Dendritic cell treated with granulocyte-macrophage colony-stimulating factor and Interleukin-4, amounts not matched to agents 40 ng/mL and 50 ng/mL, for 4 days (primary cell): ENCODE measurements at regions of chr7 and their contacts with region 1.

Region 1: DNA sequence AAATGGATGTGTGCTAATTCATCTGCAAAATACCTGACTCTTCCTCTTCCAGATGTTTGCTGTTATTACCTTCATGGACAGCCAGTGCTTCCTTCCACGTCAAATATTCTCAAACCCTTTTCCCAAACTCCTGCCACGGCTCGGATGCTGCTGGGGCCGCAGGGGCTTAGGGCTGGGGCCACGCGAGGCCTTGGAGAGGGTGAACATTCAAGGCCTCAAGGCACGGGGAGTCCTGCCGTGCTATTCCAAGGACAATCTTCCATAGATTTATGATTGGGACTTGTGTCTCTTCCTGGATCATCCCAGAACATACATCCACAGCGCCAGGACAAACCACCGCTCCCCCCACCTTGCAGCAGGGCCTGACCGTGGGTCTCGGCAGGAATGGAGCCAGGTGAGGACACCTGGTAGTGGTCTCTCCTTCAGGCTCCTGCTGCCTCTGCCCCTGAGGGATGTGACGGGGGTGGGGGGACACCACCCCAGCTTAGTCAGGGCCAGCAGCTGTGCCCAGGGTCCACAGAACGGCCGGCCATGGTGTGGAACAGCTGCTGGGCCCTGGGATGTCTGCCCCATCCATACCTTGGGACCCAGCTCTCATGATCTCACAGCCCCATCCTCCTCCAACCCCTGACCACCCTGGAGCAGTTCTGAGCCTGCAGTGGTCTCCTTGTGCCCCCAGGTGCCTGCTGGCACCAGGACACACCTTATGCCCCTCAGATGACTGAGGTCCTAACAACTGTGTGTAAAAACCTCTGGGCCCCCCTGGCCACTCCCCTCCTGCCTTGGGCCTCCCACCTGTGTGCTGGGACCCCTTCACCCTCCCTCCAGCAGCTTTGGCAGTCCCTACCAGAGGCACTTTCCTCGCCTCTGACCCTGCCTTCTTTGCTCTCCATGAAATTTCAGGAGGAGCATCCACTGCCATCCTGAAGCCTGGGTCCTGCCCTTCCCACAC is 16.7 kb downstream of the VIPR2 start:
- H3K4me3 Mint-ChIP-seq: no peak overlapping the region
- H3K27ac Mint-ChIP-seq: no peak overlapping the region
- H3K4me1 Mint-ChIP-seq: no peaks in the 10 kb centered on the region
- H3K27me3 Mint-ChIP-seq: peaks cover 2% of the 10 kb centered on the region

Region 2: GRCh38 chr7:158760936-158761335 is 367.0 kb before region 1 on chr7:
- intact Hi-C with region 1: no loop called
- H3K4me3 Mint-ChIP-seq: no peak overlapping the region
- H3K27ac Mint-ChIP-seq: no peak overlapping the region
- H3K4me1 Mint-ChIP-seq: no peaks in the 10 kb centered on the region
- H3K27me3 Mint-ChIP-seq: no peaks in the 10 kb centered on the region

Region 3: DNA sequence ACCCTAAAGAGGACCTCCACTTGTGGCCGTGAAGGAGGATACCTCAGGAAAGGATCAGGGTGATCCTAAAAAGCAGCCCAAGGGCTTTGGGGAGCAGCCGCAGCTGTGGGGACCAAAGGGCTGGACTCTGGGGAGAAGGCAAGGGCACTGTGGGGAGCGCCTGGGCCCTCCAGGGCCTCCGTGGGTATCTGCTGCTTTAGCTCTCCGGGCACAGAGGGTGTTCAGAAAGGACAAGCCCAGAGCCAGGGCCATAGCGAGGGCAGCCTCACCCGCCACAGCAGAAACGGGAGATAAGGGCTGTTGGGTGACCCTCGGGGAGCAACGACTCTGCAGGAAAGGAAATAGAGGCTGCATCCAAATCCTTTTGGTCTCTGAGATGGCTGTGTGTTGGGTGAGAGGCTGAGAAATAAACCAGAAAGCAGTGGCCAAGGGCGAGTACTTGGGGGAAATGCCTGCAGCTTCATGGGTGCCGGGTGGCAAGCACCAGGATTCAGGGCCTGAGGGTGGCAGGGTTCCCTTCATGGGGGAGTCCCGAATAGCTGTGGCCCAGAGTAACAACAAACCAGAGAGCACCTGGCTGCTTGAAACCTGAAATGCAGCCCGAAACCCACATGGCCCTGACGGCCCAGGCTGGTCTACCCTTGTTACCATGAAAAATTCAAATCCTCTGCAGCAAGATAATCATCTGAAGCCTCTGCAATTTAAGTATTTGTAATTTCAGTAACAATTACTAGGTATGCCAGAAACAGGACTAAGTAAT is 78.5 kb before region 1 on chr7:
- intact Hi-C with region 1: no loop called
- H3K4me3 Mint-ChIP-seq: no peak overlapping the region
- H3K27ac Mint-ChIP-seq: no peak overlapping the region
- H3K4me1 Mint-ChIP-seq: no peaks in the 10 kb centered on the region
- H3K27me3 Mint-ChIP-seq: peaks cover 10% of the 10 kb centered on the region

Region 4: DNA sequence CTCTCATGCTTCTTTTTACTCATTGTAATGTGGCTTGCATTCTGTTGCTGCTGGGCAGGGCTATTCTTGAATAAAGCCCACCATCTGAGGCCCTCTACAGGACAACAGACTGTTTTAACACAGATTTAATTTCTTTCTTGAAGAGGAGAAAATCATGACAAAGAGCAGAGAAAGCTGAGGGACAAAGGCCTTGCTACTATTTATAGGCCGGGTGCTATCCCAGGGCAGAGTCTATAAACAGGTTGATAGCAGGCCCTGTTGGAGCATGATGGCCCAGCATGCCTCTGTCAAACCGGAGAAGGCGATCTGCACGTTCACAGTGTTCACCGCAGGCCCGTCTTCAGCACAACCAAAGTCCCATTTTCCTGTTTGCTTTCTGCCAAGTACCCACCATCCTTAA is 13.7 kb after region 1 on chr7:
- intact Hi-C with region 1: no loop called
- H3K4me3 Mint-ChIP-seq: no peak overlapping the region
- H3K27ac Mint-ChIP-seq: no peak overlapping the region
- H3K4me1 Mint-ChIP-seq: no peaks in the 10 kb centered on the region
- H3K27me3 Mint-ChIP-seq: peaks cover 47% of the 10 kb centered on the region

Region 5: DNA sequence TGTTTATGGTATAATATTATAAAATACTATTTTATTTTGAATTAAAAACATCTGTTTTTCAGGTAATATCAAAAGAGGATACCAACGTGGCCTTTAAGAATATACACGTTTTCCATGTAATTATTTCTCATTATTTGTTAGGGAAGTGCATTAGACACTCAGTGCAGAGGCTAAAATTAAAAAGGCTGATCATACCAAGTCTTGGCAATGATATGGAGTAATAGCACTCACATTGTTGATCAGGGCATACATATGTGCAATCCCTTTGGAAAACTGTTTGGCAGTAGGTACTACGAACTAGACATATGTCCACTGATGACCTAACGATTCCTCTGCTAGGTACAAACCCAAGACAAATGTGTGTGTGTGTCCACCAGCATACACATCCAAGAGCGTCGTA is 37.4 kb after region 1 on chr7:
- intact Hi-C with region 1: loop called (anchors 2 kb)
- H3K4me3 Mint-ChIP-seq: no peak overlapping the region
- H3K27ac Mint-ChIP-seq: no peak overlapping the region
- H3K4me1 Mint-ChIP-seq: no peaks in the 10 kb centered on the region
- H3K27me3 Mint-ChIP-seq: no peaks in the 10 kb centered on the region